ENCODE measurements at regions of chr5 and their contacts with region 1.

Region 1: DNA sequence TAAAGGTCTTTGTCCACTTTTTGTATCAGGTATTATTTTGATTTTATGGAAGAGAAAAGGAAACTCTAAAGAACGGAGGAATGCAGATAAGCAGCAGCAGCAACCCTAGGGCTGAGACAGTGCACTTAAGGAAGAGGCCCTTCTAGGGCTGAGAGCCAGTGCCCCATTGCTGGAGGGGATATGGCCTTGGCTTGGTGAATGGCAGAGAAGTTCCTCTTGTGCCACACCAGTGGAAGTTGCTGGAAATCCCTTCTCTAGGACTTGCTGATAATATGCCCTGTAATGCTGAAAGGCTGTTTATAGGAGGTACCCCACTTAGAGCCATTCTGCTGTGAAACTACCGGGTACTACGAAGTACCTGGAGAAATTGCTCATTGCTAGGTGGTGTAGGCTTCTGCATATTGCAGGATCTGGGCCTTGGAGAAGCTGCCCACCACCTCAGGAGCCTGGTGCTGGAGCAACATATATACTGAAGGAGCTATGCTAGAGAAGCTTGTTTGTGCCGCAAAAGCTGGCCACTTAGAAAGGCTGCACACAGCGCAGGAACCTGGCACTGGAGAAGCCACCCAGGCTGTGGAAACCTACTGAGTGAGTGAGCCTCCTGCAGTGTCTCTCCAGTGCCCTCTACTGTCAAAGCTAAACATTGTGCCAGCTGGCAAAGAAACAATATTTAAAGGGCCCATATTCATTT is 9.6 kb upstream of the UBTD2 start:
- DNase-seq: peak; percentile 56 to 69
- H3K4me3 ChIP-seq: no peak overlapping the region
- H3K27ac ChIP-seq: no peak overlapping the region
- H3K4me1 ChIP-seq: peaks cover 0 to 3% of the 10 kb centered on the region in 2 donors
- H3K27me3 ChIP-seq: no peaks in the 10 kb centered on the region
- CTCF ChIP-seq: peak in 2 of 3 donors; percentile 70 to 73
- POLR2A ChIP-seq: no peak

Region 2: DNA sequence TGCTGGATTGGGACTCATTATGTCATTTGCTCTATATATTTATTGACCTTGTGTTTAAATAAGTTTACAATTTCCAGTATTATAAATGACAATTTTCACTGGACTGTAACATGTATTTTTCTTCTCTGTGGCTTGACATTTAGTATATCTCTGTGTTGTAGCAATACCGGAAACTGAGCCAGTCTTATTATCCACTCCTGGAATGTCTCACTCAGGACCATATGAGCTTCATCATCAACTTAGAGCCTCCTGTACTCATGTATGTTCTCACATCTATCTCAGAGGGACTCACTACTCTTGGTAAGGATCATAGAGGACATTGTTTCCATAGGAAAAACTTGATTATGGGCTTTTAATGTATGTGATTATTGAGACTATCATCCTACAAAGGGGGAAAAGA is 1050.7 kb before region 1 on chr5:
- intact Hi-C with region 1: loop called (anchors 10 kb)
- DNase-seq: no peak
- H3K4me3 ChIP-seq: no peak overlapping the region
- H3K27ac ChIP-seq: no peak overlapping the region
- H3K4me1 ChIP-seq: no peaks in the 10 kb centered on the region
- H3K27me3 ChIP-seq: no peaks in the 10 kb centered on the region
- CTCF ChIP-seq: no peak
- POLR2A ChIP-seq: no peak

Region 3: GRCh38 chr5:172334196-172334595 is 41.0 kb after region 1 on chr5:
- intact Hi-C with region 1: no loop called
- DNase-seq: no peak
- H3K4me3 ChIP-seq: no peak overlapping the region
- H3K27ac ChIP-seq: no peak overlapping the region
- H3K4me1 ChIP-seq: no peaks in the 10 kb centered on the region
- H3K27me3 ChIP-seq: no peaks in the 10 kb centered on the region
- CTCF ChIP-seq: no peak
- POLR2A ChIP-seq: no peak

Measured in breast epithelium (tissue), 4 donors.